ENCODE measurements at regions of chr6 and their contacts with region 1.

Region 1: DNA sequence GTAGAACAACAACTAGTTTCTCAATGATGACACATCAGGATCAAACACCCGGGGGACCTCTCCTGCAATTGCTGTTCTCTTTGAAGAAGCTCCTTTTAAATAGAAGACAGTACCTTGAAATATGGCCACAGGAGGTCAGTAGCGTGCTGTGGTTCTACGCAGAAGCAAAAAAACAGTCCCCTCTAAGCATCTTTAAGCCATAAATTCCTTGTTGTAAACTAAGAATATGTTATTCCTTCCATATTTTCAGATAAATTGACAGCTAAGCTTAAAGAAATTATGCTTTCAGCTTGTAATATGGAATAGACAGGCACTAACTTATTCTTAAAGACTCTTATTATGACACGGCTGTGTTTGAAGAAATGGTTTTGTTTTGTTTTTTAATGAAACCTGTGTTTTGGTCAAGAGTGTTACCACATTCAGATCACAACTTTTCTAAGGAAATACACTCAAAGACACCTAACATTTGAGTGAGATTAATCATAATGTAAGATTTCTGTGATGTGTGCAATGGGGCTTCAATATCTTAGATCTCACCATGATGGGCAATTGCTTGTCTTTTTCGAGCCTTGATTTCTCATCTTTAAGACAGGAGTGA is 49.7 kb upstream of the IL20RA start:
- DNase-seq: peak; percentile 29
- H3K4me3 Mint-ChIP-seq: no peak overlapping the region
- H3K27ac Mint-ChIP-seq: no peak overlapping the region
- H3K4me1 Mint-ChIP-seq: peaks cover 26% of the 10 kb centered on the region
- H3K27me3 Mint-ChIP-seq: peaks cover 2% of the 10 kb centered on the region

Region 2: GRCh38 chr6:137165375-137166246 is 71.1 kb after region 1 on chr6:
- intact Hi-C with region 1: loop called (anchors 5 kb)
- DNase-seq: peak; percentile 58
- H3K4me3 Mint-ChIP-seq: no peak overlapping the region
- H3K27ac Mint-ChIP-seq: no peak overlapping the region
- H3K4me1 Mint-ChIP-seq: peaks cover 34% of the 10 kb centered on the region
- H3K27me3 Mint-ChIP-seq: peaks cover 8% of the 10 kb centered on the region

Region 3: GRCh38 chr6:137240168-137240567 is 145.7 kb after region 1 on chr6:
- intact Hi-C with region 1: no loop called
- DNase-seq: no peak
- H3K4me3 Mint-ChIP-seq: no peak overlapping the region
- H3K27ac Mint-ChIP-seq: no peak overlapping the region
- H3K4me1 Mint-ChIP-seq: peaks cover 7% of the 10 kb centered on the region
- H3K27me3 Mint-ChIP-seq: peaks cover 3% of the 10 kb centered on the region

Region 4: GRCh38 chr6:137271245-137272183 is 177.0 kb after region 1 on chr6:
- intact Hi-C with region 1: loop called (anchors 5 kb)
- DNase-seq: no peak
- H3K4me3 Mint-ChIP-seq: no peak overlapping the region
- H3K27ac Mint-ChIP-seq: no peak overlapping the region
- H3K4me1 Mint-ChIP-seq: peaks cover 6% of the 10 kb centered on the region
- H3K27me3 Mint-ChIP-seq: peaks cover 33% of the 10 kb centered on the region

Region 5: GRCh38 chr6:137313928-137314855 is 219.7 kb after region 1 on chr6:
- intact Hi-C with region 1: loop called (anchors 1 kb)
- DNase-seq: peak; percentile 23
- H3K4me3 Mint-ChIP-seq: no peak overlapping the region
- H3K27ac Mint-ChIP-seq: no peak overlapping the region
- H3K4me1 Mint-ChIP-seq: peaks cover 3% of the 10 kb centered on the region
- H3K27me3 Mint-ChIP-seq: peaks cover 18% of the 10 kb centered on the region

Region 6: DNA sequence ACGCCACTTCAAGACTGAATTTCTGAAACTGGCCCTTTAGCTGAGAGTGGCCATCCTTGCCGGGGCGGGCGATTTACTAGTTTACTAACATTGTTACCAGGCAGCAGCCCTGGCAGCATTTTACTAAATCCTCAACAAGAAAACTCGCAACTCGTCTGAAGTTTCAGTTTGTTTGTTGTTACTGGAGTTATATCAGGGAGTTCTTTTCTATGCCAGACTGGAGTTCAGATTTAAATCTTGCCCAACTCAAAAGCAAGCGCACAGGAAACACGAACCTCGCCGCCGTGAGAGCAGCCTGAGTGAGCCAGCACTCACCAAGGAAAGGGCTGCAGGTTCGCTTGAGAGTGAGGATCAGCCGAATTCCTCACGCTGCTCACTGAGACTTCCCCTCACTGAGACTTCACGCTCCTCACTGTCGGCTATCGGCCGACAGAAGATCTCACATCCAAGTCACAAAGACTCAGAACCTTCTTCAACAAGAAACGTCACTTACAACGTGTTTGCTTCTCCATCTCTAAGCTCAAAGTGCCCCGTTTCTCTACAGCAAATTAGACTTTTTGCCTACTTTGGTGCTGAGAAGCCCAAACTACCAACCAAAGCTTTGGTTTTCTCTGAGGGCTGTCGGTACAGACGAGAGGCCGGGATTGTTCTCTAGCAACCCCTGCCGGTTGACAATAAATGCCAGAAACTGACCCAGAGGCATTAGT is 320.8 kb after region 1 on chr6:
- intact Hi-C with region 1: loop called (anchors 1 kb)
- DNase-seq: peak; percentile 54
- H3K4me3 Mint-ChIP-seq: peak overlapping the region; percentile 76
- H3K27ac Mint-ChIP-seq: no peak overlapping the region
- H3K4me1 Mint-ChIP-seq: peaks cover 10% of the 10 kb centered on the region
- H3K27me3 Mint-ChIP-seq: peaks cover 34% of the 10 kb centered on the region